Activated naive CD4-positive, alpha-beta T cell treated with anti-CD3 and anti-CD28 coated beads for 36 hours (primary cell): ENCODE measurements at regions of chr10 and their contacts with region 1.

Region 1: DNA sequence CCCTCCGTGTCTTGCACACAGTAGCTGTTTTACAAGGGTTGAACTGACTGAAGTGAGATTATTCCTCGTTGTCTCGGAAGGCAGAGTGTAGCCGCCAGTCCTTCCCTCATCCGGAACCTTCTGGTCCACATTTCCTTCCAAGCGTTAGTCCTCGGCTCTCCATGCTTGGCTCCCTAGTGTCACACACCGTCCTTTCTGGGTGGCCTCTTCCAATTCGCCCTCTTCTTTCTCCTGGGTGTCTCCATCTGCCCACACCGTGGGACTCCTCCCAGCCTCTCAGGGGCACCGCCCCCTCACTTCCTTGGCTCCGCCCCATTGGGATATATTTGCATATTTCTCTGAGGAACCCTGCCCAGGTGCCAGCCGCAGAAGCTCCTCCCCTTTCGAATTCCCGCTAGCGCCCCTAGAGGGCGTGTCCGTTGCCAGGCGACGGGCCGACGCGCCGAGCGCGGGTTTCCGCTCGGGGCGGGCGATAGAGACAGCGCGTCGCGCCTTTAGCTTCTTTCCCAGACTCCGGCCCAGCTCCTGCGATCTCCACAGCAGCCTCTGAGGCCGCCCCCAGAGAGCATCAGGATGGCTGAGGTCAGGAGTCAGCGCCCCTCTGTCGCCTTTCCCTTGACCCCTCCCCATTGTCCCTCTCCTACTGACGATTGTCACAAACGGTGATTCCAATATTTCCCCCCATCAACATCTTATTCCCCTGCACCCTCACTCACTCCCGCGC is at the start of gene CFAP58:
- DNase-seq: peak; percentile 94
- H3K4me3 Mint-ChIP-seq: peak within 1 kb of the TSS; percentile 5
- H3K27ac Mint-ChIP-seq: peak within 1 kb of the TSS; percentile 8
- H3K4me1 Mint-ChIP-seq: no peaks in the 10 kb centered on the region
- H3K27me3 Mint-ChIP-seq: no peaks in the 10 kb centered on the region
- total RNA-seq, gene CFAP58: 0.59 to 0.86 TPM

Region 2: GRCh38 chr10:104274762-104275721 is 78.4 kb before region 1 on chr10:
- CTCF ChIA-PET with region 1: interaction called, 84 read pairs
- intact Hi-C with region 1: loop called (anchors 1 kb)
- DNase-seq: peak; percentile 63
- H3K4me3 Mint-ChIP-seq: peak overlapping the region; percentile 65
- H3K27ac Mint-ChIP-seq: no peak overlapping the region
- H3K4me1 Mint-ChIP-seq: peaks cover 6% of the 10 kb centered on the region
- H3K27me3 Mint-ChIP-seq: peaks cover 9% of the 10 kb centered on the region

Region 3: GRCh38 chr10:104300736-104301292 is 52.7 kb before region 1 on chr10:
- CTCF ChIA-PET with region 1: interaction called, 177 read pairs
- intact Hi-C with region 1: loop called (anchors 1 kb)
- DNase-seq: peak; percentile 67
- H3K4me3 Mint-ChIP-seq: peak overlapping the region; percentile 64
- H3K27ac Mint-ChIP-seq: peak overlapping the region; percentile 78
- H3K4me1 Mint-ChIP-seq: peaks cover 36% of the 10 kb centered on the region
- H3K27me3 Mint-ChIP-seq: peaks cover under 1% of the 10 kb centered on the region

Region 4: GRCh38 chr10:104322416-104322782 is 31.1 kb before region 1 on chr10:
- CTCF ChIA-PET with region 1: interaction called, 23 read pairs
- intact Hi-C with region 1: no loop called
- DNase-seq: peak; percentile 79
- H3K4me3 Mint-ChIP-seq: peak overlapping the region; percentile 20
- H3K27ac Mint-ChIP-seq: peak overlapping the region; percentile 81
- H3K4me1 Mint-ChIP-seq: peaks cover 94% of the 10 kb centered on the region
- H3K27me3 Mint-ChIP-seq: no peaks in the 10 kb centered on the region

Region 5: DNA sequence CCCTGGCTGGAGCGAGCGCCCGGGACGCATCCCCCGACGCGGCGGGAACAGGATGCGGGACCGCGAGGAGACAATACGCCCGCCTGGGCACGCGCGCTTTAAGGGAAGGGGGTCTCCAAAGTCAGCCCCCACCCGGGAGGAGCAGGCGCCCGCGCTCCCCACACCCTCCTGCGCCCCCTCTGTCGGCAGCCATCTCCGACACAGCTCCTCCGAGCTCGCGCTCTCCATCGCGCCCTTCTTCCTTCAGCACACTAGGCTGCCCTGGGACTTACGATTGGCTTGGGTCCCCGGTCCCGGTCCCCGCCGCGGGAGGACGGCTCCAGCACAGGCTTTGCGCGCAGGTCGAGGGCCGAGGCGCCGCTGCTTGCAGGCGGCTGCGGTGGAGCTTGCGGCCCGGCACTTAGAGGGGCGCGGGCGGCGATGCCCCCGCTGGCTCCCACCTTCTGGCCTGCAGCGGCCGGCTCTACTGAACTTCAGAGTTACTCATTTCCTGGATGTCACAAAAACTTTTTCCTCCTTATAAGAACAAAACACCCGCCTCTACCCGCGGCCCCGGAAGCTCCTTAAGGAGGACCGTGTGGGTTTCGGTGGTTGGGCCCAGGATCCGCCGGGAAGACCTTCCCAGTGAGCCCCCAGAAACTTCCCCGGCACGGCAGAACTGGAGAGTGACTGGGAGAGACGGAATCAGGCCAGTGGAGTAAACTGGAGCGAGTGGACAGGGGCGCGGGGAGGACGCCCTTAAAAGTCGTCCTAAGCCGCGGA is 15.3 kb before region 1 on chr10 and contains the start of gene ITPRIP:
- CTCF ChIA-PET with region 1: interaction called, 25 read pairs
- intact Hi-C with region 1: loop called (anchors 1 kb)
- DNase-seq: peak; percentile 78
- H3K4me3 Mint-ChIP-seq: peak within 1 kb of the TSS; percentile 84
- H3K27ac Mint-ChIP-seq: peak within 1 kb of the TSS; percentile 98
- H3K4me1 Mint-ChIP-seq: peaks cover 46% of the 10 kb centered on the region
- H3K27me3 Mint-ChIP-seq: no peaks in the 10 kb centered on the region
- total RNA-seq, gene ITPRIP: 24.5 to 25.3 TPM